Calu3 (cell line): ENCODE measurements at regions of chr17 and their contacts with region 1.

Region 1: DNA sequence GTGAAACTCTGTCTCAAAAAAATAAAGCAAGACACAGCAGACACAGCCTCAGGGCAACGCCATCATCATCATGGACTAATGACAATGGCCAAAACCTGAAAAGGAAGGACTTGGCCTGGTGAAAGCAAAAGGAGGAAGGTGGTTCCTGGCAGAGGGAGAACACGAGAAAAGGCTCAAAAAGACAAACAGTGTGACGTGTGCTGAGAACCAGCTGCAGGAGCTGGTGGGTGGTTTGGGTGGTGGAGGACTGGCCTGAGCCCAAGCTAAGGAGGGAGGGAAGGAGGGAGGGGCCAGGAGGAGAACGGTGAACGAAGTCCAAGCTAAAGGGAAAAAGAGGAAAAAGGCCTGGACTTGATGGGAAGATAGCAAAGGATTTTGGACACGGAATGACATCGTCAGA is 85.1 kb downstream of the SLC39A11 start:
- DNase-seq: no peak
- H3K4me3 Mint-ChIP-seq: no peak overlapping the region
- H3K27ac Mint-ChIP-seq: no peak overlapping the region
- H3K4me1 Mint-ChIP-seq: peaks cover 23% of the 10 kb centered on the region
- H3K27me3 Mint-ChIP-seq: no peaks in the 10 kb centered on the region
- CTCF ChIP-seq: no peak

Region 2: GRCh38 chr17:72928454-72929136 is 78.8 kb before region 1 on chr17:
- CTCF ChIA-PET with region 1: interaction called, 12 read pairs
- intact Hi-C with region 1: no loop called
- DNase-seq: peak; percentile 3
- H3K4me3 Mint-ChIP-seq: no peak overlapping the region
- H3K27ac Mint-ChIP-seq: no peak overlapping the region
- H3K4me1 Mint-ChIP-seq: peaks cover 26% of the 10 kb centered on the region
- H3K27me3 Mint-ChIP-seq: no peaks in the 10 kb centered on the region
- CTCF ChIP-seq: no peak

Region 3: DNA sequence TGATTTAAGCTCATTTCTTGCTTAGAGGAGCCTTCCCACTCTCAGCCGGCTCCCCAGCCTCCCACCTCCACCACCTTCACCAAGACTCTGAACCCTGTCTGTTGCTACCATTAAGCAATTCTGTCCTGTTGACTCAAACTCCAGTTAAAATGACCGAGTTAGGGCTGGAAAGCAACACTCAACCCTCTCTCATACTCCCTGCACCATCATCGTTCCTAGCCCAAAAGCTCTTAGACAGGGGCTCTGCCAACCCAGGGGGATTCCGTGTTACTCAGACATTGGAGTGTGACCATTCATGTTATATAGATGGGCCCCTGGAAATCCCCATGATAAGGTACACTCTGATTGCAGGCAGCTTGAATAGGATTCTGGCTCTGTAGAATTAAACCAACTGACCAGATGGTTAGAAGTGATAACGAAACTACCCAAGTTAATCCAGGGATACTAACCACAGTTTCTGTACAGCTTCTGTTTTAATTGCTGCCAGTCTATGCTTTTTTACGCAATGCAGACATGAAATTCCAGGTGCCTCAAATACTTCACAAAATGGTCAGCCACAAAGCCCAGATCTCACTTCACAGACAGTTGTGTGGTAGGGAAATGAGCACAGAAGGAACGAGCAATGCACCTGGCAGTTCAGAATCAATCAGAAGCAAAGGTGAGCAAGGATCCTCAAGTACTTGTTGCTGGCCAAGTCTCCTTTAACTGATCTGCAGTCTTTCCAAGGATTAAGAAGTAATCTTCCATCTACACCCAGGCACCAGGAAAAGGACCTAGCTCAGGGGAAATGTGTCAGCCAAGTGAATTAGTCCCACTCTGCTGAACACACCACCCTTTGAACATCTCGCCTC is 159.5 kb after region 1 on chr17:
- CTCF ChIA-PET with region 1: no interaction called
- intact Hi-C with region 1: no loop called
- DNase-seq: no peak
- H3K4me3 Mint-ChIP-seq: peak overlapping the region; percentile 77
- H3K27ac Mint-ChIP-seq: no peak overlapping the region
- H3K4me1 Mint-ChIP-seq: peaks cover 31% of the 10 kb centered on the region
- H3K27me3 Mint-ChIP-seq: peaks cover 61% of the 10 kb centered on the region
- CTCF ChIP-seq: no peak